Adrenal gland (tissue), 19 donors: ENCODE measurements at regions of chr1 and their contacts with region 1.

Region 1: DNA sequence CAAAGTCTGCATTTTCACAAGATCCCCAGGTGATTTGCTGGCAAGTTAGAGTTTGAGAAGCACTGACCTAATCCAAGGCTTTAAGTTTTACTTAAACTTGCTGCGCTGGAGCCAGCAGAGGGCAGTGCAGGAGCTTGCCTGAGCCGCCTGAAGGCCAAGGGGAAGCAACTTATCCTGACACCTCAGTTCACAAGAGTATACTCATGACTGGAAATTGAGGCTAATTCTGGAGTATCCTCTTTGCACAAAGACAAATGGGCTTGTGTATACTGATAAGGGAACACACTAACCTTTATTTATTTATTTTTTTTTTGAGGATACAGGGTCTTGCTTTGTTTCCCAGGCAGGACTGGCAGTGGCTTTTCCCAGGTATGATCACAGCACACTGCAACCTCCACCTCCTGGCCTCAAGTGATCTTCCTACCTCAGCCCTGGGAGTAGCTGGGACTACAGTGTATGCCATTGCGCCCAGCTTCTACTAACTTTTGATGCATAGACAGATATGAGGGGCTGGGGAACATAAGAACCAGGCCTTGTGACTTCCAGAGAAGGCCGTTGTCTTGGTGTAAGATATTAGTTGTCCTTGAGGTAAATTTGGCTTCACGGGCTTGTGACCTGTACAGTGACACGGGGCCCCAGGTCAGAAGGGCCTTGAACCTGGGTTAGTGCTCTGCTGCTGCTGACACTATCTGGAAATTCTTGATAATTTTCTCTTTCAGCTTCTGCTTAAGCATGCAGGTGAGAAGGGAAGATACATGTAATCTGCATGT is 29.0 kb upstream of the SLAMF1 start:
- DNase-seq: peak; percentile 54 to 80 (median 70)
- H3K4me3 ChIP-seq: no peak overlapping the region
- H3K27ac ChIP-seq: no peak overlapping the region
- H3K4me1 ChIP-seq: no peaks in the 10 kb centered on the region
- H3K27me3 ChIP-seq: no peaks in the 10 kb centered on the region
- CTCF ChIP-seq: peak; percentile 43 to 71 (median 60)
- POLR2A ChIP-seq: no peak

Region 2: DNA sequence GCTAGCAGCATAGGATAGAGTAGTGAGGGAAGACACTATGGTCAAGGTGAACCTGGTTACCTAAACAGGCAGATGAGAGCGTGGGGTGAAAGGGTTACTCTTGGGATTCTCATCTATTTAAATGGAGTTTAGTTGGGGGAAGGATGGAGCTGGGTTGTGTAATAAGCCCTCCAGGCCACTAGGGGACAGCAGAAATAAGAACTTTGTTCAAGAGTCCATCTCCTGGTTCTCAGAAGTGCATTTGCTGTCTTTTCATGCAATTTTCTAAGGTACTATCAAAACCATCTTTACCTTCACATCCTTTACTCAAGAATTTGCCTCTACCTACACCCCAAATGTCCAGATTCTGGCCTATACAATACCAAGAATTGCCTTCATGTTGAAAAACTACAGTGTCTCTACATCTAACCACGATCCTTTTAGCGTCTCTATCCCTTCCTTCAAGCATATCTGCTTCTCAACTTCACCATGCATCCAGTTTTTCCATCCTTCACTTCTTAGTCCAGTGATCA is 57.0 kb before region 1 on chr1:
- intact Hi-C with region 1: loop called in 1 of 2 experiments (anchors 10 kb)
- DNase-seq: no peak
- H3K4me3 ChIP-seq: no peak overlapping the region
- H3K27ac ChIP-seq: no peak overlapping the region
- H3K4me1 ChIP-seq: no peaks in the 10 kb centered on the region
- H3K27me3 ChIP-seq: no peaks in the 10 kb centered on the region
- CTCF ChIP-seq: peak in 4 of 6 experiments; percentile 16 to 39 (median 22)
- POLR2A ChIP-seq: no peak

Region 3: DNA sequence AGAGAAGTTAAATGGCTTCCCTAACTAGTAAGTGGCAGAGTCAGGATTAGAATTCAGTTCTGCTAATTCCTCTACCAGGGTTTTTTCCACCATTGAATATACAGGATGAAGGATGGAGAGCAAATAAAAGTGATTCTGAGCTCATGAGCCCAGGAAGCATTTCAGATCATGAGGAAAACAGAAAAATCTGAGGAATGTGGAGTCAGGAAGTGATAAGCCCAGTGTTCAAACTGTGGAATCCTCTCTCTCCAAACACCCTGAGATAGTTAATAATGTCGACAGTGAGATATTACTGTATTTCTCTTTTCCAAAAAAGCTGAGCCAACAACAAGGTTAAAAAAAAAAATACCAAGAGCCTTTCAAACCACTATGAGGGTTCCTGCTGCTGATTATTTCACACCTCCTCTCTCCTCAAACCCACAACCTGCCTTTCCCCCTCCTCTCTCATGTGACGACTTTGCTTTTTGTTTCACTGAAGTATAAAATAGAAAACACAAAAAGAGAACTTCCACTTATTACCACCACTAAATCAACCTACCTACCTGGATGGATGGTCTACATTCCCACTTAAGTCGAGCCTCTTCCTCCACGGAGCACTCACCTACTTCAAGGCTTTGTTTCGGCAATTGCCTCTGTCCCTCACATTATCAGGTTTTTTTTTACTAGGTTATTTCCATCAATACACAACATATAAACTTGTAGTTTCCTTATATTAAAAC is 37.8 kb before region 1 on chr1:
- intact Hi-C with region 1: no loop called
- DNase-seq: no peak
- H3K4me3 ChIP-seq: no peak overlapping the region
- H3K27ac ChIP-seq: no peak overlapping the region
- H3K4me1 ChIP-seq: no peaks in the 10 kb centered on the region
- H3K27me3 ChIP-seq: no peaks in the 10 kb centered on the region
- CTCF ChIP-seq: no peak
- POLR2A ChIP-seq: no peak